ENCODE measurements at regions of chr6 and their contacts with region 1.

Region 1: DNA sequence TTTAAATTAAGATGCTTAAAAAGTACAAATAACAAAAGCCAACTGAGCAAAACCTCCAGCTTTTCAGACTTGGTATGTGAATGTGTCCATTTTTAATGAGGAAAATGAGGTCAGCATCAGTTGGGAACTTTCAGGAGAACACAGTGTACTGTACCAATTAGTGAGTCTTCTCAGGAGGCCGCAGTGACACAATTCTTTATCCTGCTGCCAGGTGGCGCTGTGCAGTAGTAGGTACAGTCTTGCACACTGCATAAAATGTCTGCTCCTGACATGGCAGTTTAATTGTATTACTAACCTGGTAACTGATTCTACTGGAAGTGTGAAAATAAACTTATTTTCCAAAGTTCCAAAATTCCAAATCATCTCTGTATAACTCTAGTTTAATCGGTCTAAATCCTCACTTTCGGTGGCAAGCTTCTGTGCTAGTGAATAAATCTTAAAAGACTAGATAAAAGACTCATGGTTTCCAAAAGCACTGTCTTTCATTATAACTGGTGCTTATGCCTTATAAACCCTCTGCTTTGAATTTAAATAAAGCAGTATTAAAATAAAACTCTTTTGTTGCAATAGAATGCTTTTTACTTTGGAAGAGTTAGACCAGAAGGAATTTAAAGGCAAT is 214.8 kb upstream of the MMS22L start:
- DNase-seq: peak; percentile 72
- H3K4me3 Mint-ChIP-seq: no peak overlapping the region
- H3K27ac Mint-ChIP-seq: no peak overlapping the region
- H3K4me1 Mint-ChIP-seq: no peaks in the 10 kb centered on the region
- H3K27me3 Mint-ChIP-seq: peaks cover 53% of the 10 kb centered on the region
- CTCF ChIP-seq: peak; percentile 81

Region 2: DNA sequence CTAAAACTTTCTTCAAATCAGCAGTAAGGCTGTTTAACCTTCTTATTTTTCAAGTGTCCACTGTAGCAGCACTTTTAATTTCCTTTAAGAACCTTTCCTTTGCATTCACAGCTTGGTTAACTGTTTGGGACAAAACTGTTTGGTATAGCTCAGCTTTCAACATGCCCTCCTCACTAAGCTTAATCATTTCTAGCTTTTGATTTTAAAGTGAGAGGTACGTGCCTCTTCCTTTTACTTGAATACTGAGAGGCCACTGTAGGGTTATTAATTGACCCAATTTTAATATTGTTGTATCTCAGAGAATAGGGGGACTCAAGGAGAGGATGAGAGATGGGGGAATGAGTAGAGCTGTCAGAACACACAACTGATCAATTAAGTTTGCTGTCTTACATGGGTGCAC is 85.3 kb before region 1 on chr6:
- CTCF ChIA-PET with region 1: no interaction called
- POLR2A ChIA-PET with region 1: no interaction called
- intact Hi-C with region 1: no loop called
- DNase-seq: no peak
- H3K4me3 Mint-ChIP-seq: no peak overlapping the region
- H3K27ac Mint-ChIP-seq: no peak overlapping the region
- H3K4me1 Mint-ChIP-seq: no peaks in the 10 kb centered on the region
- H3K27me3 Mint-ChIP-seq: peaks cover 33% of the 10 kb centered on the region
- CTCF ChIP-seq: no peak

Region 3: DNA sequence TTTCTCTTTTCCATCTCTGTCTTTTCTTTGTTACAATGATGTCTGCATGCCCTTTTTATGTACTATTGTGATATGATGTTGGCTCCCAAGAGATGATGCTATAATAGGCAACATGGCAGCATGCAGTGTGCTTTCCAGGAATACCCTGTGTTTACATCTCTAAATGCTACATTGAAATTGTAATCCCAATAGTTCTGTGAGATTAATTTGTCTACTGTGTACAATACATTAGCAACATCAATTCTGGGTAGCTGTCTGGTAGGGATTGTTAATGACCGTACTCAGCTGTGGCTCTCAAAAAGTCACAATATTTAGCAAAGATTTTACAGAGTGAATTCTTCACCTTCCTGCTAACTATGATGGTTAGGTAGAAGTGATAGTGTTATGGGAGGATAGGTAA is 10.8 kb after region 1 on chr6:
- CTCF ChIA-PET with region 1: interaction called, 11 read pairs
- POLR2A ChIA-PET with region 1: no interaction called
- intact Hi-C with region 1: no loop called
- DNase-seq: no peak
- H3K4me3 Mint-ChIP-seq: no peak overlapping the region
- H3K27ac Mint-ChIP-seq: no peak overlapping the region
- H3K4me1 Mint-ChIP-seq: no peaks in the 10 kb centered on the region
- H3K27me3 Mint-ChIP-seq: peaks cover 79% of the 10 kb centered on the region
- CTCF ChIP-seq: no peak